ENCODE measurements at regions of chrX and their contacts with region 1.

Region 1: GRCh38 chrX:19372170-19372546 is 28.4 kb downstream of the PDHA1 start:
- DNase-seq: peak; percentile 75
- H3K4me3 ChIP-seq: peak overlapping the region in 2 of 3 experiments; percentile 36 to 50
- H3K27ac ChIP-seq: no peak overlapping the region
- H3K4me1 ChIP-seq: no peaks in the 10 kb centered on the region
- H3K27me3 ChIP-seq: no peaks in the 10 kb centered on the region
- CTCF ChIP-seq: peak; percentile 62 to 66
- POLR2A ChIP-seq: no peak

Region 2: DNA sequence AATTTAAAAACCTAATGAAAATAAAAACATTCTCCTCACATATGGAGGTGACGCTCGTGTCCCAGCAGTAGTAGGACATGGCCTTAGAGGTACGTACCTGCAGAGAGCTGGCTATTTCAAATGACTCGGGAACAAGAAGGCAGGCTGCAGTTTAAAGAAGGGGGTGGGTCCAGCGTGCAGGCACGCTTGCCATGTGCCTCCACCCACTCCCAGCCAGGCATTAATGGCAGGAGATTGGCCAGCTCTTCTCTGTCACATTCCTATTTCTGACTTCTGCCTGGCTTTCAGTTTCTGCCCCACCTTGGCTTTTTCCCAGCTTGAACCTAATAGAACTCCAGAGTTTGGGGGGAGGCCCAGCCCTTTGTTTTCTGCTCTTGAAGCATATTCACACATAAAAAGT is 11.3 kb before region 1 on chrX:
- CTCF ChIA-PET with region 1: interaction called, 12 read pairs
- POLR2A ChIA-PET with region 1: no interaction called
- dilution Hi-C with region 1: no loop called
- intact Hi-C with region 1: no loop called
- DNase-seq: no peak
- H3K4me3 ChIP-seq: no peak overlapping the region
- H3K27ac ChIP-seq: no peak overlapping the region
- H3K4me1 ChIP-seq: no peaks in the 10 kb centered on the region
- H3K27me3 ChIP-seq: no peaks in the 10 kb centered on the region
- CTCF ChIP-seq: no peak
- POLR2A ChIP-seq: no peak

Region 3: GRCh38 chrX:19382555-19383145 is 10.5 kb after region 1 on chrX:
- CTCF ChIA-PET with region 1: interaction called, 23 read pairs
- POLR2A ChIA-PET with region 1: no interaction called
- dilution Hi-C with region 1: no loop called
- intact Hi-C with region 1: no loop called
- DNase-seq: peak; percentile 30
- H3K4me3 ChIP-seq: no peak overlapping the region
- H3K27ac ChIP-seq: no peak overlapping the region
- H3K4me1 ChIP-seq: no peaks in the 10 kb centered on the region
- H3K27me3 ChIP-seq: no peaks in the 10 kb centered on the region
- CTCF ChIP-seq: peak; percentile 45 to 60
- POLR2A ChIP-seq: no peak

Region 4: DNA sequence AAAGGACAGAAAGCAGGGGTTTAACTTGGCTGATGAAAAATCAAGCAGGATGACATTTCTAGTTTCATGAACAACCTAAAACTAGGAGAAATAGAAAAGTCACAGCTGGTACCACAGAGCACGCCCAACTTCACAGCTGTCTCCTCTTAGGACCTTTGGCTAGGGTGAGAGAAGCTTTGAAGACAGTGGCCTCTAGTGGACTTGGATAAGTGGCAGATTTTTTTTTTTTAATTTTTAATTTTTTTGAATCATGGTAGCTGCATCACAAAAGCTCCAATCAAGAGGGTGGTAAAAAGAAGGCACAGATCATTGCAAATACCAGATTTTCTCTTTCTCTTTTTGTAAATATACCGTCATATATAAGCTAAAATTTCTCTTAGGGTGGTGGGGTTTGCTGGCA is 163.3 kb after region 1 on chrX:
- CTCF ChIA-PET with region 1: interaction called, 43 read pairs
- POLR2A ChIA-PET with region 1: interaction called, 3 read pairs
- dilution Hi-C with region 1: no loop called
- intact Hi-C with region 1: loop called (anchors 1 kb)
- DNase-seq: no peak
- H3K4me3 ChIP-seq: no peak overlapping the region
- H3K27ac ChIP-seq: no peak overlapping the region
- H3K4me1 ChIP-seq: no peaks in the 10 kb centered on the region
- H3K27me3 ChIP-seq: no peaks in the 10 kb centered on the region
- CTCF ChIP-seq: peak; percentile 7 to 21
- POLR2A ChIP-seq: no peak

Region 5: DNA sequence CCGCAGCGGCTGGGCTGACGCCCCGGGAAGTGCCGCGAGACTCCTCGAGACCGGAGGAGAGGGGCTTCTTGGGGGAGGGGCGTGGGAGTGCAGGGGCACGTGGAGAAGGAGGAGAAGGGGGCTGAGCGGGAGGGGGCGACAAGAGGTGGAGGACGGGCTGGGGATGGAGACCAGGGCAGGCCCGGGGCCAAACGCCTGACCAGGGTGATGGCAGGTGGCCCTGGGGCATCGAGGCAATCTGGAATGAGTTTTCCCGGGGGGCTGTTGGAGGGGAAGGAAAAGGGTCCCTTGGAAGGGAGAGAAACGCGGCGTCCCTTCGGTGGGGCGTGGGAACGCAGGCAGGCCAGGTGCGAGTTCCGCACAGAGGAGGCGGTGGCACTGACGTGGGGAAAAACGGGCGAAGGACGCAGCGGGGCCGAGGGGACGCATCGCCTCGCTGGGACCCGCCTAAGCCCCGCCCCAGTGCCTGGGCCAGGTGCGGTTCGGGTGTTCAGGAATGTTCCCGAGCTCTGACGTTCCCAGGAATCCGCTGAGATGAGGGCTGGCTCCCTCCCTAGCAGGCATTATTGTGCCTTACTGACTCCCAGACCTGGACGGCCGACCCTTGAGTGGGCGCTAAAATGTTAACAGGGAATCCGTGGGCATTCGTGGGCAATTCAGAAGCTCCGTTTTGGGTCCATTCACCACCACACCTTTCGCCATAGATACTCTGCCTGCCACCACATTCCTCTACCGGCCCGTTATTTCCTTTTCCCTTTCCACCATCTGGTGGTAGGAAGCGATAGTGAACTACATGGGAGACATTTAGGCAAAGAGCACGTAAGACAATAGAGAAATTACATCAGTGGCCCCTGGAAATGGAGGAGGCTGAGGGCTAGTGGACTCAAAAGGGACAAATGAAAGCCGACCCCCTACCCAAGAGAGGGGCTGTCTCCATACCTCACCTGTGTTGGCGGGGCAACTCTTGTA is 516.0 kb after region 1 on chrX:
- CTCF ChIA-PET with region 1: interaction called, 3 read pairs
- POLR2A ChIA-PET with region 1: no interaction called
- dilution Hi-C with region 1: no loop called
- intact Hi-C with region 1: loop called (anchors 1 kb)
- DNase-seq: peak; percentile 70
- H3K4me3 ChIP-seq: peak overlapping the region; percentile 20 to 42 (median 40)
- H3K27ac ChIP-seq: peak overlapping the region; percentile 14
- H3K4me1 ChIP-seq: peaks cover 3% of the 10 kb centered on the region
- H3K27me3 ChIP-seq: no peaks in the 10 kb centered on the region
- CTCF ChIP-seq: peak; percentile 37 to 38
- POLR2A ChIP-seq: no peak

Region 6: DNA sequence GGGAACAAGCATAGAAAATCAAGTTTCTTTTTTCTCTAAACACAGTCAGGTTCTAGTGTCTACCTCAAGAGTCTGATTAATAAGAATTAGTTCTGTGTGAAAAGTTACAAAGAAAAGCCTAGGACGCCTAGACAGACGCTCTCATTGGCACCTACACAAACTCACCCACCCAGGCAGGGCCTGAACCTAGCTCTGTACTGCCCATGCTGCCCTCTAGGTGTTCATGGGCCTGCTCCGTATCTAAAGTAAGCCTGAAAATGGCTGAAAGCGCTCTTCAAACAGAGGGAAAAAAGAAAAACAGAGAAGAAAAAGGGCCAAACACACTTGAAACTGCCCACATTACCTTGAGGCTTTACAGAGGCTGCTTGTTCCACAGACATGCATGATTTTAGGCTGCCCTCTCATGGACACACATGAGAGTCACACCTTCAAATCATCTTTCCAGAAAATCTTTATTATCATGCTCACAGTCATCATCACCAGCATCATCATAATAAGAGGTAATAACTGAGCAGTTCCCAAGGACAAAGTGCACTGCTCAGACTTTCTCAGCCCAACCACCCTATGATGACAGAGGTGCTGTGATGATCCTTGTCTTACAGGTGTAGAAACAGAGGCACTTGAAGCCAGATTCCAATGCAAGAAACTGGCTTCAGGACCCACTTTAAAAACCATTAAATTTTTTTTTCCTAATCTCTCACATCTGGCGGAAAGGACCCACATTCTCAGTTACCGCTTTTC is 695.0 kb after region 1 on chrX:
- CTCF ChIA-PET with region 1: interaction called, 9 read pairs
- POLR2A ChIA-PET with region 1: no interaction called
- dilution Hi-C with region 1: no loop called
- intact Hi-C with region 1: loop called (anchors 2 kb)
- DNase-seq: peak; percentile 11
- H3K4me3 ChIP-seq: no peak overlapping the region
- H3K27ac ChIP-seq: no peak overlapping the region
- H3K4me1 ChIP-seq: peaks cover 4% of the 10 kb centered on the region
- H3K27me3 ChIP-seq: no peaks in the 10 kb centered on the region
- CTCF ChIP-seq: peak in 1 of 2 donors; percentile 15
- POLR2A ChIP-seq: no peak